GM13976 (cell line): ENCODE measurements at regions of chr1 and their contacts with region 1.

Region 1: GRCh38 chr1:15128520-15129313 is 24.8 kb upstream of the TMEM51 start:
- DNase-seq: peak; percentile 87
- CTCF ChIP-seq: peak; percentile 95

Region 2: DNA sequence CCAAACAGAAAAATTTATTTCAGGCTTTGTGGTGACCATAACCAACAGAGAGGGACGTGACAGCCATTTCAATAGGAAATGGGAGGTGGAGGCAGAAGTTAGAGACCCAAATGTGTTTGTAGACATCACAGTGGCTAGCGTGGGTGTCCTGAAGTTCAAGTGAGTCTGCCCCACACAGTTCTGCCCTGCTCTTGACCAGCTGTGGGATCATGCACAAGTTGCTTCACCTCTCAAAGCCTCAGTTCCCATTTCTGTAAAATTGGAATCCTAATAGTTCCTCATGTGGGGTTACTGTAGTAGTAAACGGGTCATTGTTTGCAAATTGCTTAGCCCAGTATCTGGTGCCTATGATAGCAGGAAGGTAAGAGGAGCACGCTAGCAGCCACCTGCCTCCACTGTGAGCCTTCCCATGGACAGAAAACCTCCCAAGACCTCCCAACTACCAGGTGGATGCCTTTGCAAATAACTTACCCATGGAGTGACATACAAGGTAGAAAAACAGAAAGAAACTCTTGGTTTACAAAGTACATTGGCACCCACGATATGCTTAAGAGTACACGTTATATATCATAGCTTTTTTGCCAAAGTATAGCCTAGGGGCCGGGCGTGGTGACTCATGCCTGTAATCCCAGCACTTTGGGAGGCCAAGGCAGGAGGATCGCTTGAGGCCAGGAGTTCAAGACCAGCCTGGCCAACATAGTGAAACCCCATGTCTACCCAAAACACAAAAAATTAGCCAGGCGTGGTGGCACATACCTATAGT is 147.4 kb after region 1 on chr1:
- in situ Hi-C with region 1: loop called (anchors 5 kb)
- DNase-seq: no peak
- CTCF ChIP-seq: no peak